CD8-positive, alpha-beta T cell (primary cell): ENCODE measurements at regions of chrX and their contacts with region 1.

Region 1: DNA sequence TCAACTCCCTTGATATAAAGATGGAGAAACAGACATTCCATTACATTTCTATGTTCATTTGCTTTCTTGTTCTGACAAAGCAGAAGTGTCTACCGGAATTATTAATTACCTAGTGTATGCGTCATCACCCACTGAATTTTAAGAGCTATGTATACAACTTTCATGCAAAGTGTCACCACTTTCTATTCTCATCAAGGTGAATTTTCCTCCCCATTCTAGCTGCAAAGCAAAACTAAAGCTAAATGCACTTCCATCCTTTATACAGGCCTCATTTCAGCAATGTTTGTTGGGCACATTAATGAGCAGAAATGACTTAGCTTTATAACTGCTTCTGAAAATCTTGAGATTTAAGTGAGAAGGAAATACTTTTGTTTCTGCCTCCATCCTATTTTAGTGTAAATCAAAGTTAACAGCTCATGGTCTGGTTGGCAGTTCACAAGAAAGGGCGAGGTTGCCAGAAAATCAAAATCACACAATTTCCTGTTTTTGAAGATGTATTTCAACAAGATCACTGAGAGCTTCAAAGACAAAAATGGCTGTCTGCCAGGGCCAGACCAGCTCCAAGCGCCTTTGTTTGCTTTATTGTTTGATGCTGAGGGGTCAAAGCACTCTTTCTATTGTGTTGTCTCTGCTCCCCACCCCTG is 7.2 kb upstream of the FAM9C start:
- DNase-seq: peak in 8 of 9 experiments; percentile 17 to 80 (median 54)
- ATAC-seq: peak; percentile 81
- H3K4me3 ChIP-seq: no peak overlapping the region
- H3K4me3 Mint-ChIP-seq: peak overlapping the region; percentile 50
- H3K27ac ChIP-seq: peak overlapping the region; percentile 39 to 74
- H3K27ac Mint-ChIP-seq: peak overlapping the region; percentile 95
- H3K4me1 ChIP-seq: peaks cover 79% of the 10 kb centered on the region
- H3K4me1 Mint-ChIP-seq: peaks cover 72% of the 10 kb centered on the region
- H3K27me3 ChIP-seq: no peaks in the 10 kb centered on the region
- H3K27me3 Mint-ChIP-seq: no peaks in the 10 kb centered on the region
- CTCF ChIP-seq: no peak

Region 2: DNA sequence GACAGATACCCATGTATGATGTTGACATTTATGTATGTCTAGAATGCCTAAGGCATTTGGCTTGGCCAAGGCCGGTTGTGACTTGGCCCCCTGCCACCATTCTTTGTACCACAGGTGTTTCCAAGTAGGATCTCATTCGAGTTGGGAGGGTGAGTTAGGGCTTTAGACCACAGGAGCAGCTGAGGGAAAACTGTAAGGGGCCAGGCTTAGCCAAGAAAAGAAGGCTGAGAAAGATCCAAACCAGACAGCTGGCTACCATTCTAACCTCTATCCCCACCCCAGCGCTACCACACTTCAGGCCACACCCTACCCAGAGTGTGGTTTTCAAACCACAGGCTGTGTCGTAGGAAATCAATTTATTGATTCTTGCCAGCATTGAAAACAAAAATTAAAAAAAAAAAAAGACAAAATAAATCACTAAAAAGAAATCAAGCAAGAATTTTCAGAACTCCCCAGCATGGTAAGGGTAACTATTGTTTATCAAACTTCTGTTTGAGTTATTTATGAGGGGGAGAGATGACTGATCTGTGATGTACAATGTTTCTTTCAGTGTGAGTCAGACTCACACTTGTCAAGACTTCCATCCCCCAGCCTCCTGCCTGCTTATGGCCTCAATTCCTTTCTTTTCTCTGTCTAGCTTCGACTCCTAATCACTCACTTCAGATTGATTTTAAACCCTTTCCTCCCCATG is 66.9 kb before region 1 on chrX:
- CTCF ChIA-PET with region 1: interaction called, 11 read pairs
- POLR2A ChIA-PET with region 1: interaction called, 10 read pairs
- intact Hi-C with region 1: loop called in 1 of 2 experiments (anchors 2 kb)
- DNase-seq: peak in 6 of 9 experiments; percentile 50 to 76 (median 60)
- ATAC-seq: peak; percentile 74
- H3K4me3 ChIP-seq: peak overlapping the region in 1 of 2 experiments; percentile 20
- H3K4me3 Mint-ChIP-seq: peak overlapping the region; percentile 78
- H3K27ac ChIP-seq: peak overlapping the region; percentile 62 to 72
- H3K27ac Mint-ChIP-seq: peak overlapping the region; percentile 99
- H3K4me1 ChIP-seq: peaks cover 69% of the 10 kb centered on the region
- H3K4me1 Mint-ChIP-seq: peaks cover 72% of the 10 kb centered on the region
- H3K27me3 ChIP-seq: no peaks in the 10 kb centered on the region
- H3K27me3 Mint-ChIP-seq: no peaks in the 10 kb centered on the region
- CTCF ChIP-seq: no peak

Region 3: GRCh38 chrX:13000301-13000811 is 51.3 kb before region 1 on chrX:
- CTCF ChIA-PET with region 1: interaction called, 6 read pairs
- POLR2A ChIA-PET with region 1: interaction called, 3 read pairs
- intact Hi-C with region 1: loop called in 1 of 2 experiments (anchors 1 kb)
- DNase-seq: peak in 6 of 9 experiments; percentile 31 to 73 (median 54)
- ATAC-seq: peak; percentile 55
- H3K4me3 ChIP-seq: peak overlapping the region; percentile 16 to 40
- H3K4me3 Mint-ChIP-seq: peak overlapping the region; percentile 82
- H3K27ac ChIP-seq: peak overlapping the region; percentile 65 to 84
- H3K27ac Mint-ChIP-seq: peak overlapping the region; percentile 96
- H3K4me1 ChIP-seq: peaks cover 68% of the 10 kb centered on the region
- H3K4me1 Mint-ChIP-seq: peaks cover 79% of the 10 kb centered on the region
- H3K27me3 ChIP-seq: no peaks in the 10 kb centered on the region
- H3K27me3 Mint-ChIP-seq: no peaks in the 10 kb centered on the region
- CTCF ChIP-seq: no peak

Region 4: GRCh38 chrX:13013363-13014110 is 38.1 kb before region 1 on chrX:
- CTCF ChIA-PET with region 1: no interaction called
- POLR2A ChIA-PET with region 1: interaction called, 10 read pairs
- intact Hi-C with region 1: no loop called
- DNase-seq: peak in 2 of 9 experiments; percentile 30 to 65
- ATAC-seq: peak; percentile 78
- H3K4me3 ChIP-seq: peak overlapping the region; percentile 14 to 18
- H3K4me3 Mint-ChIP-seq: peak overlapping the region; percentile 47
- H3K27ac ChIP-seq: peak overlapping the region; percentile 47 to 84
- H3K27ac Mint-ChIP-seq: peak overlapping the region; percentile 95
- H3K4me1 ChIP-seq: peaks cover 42% of the 10 kb centered on the region
- H3K4me1 Mint-ChIP-seq: peaks cover 57% of the 10 kb centered on the region
- H3K27me3 ChIP-seq: no peaks in the 10 kb centered on the region
- H3K27me3 Mint-ChIP-seq: no peaks in the 10 kb centered on the region
- CTCF ChIP-seq: no peak

Region 5: DNA sequence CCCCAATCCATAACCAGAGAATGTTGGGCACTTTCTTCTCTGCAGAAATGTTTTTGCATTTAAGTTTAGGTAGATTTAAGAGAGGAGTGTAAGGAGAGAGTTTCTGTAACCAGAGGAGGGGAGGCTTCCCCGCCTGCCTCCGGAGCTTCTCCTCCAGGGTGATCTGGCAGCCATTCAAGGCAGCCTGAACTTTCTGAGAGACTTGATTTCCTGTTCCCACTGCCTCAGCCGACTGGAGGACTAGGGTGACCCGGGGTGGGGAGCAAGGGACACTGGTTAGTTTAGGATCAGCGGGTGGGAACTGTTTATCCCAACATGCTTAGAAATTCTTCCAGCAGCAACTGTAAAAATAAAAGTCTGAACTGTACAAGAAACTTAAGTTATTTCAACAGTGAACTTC is 22.3 kb before region 1 on chrX:
- CTCF ChIA-PET with region 1: interaction called, 4 read pairs
- POLR2A ChIA-PET with region 1: interaction called, 13 read pairs
- intact Hi-C with region 1: loop called in 1 of 2 experiments (anchors 2 kb)
- DNase-seq: peak in 5 of 9 experiments; percentile 18 to 50 (median 24)
- ATAC-seq: no peak
- H3K4me3 ChIP-seq: peak overlapping the region in 1 of 2 experiments; percentile 5
- H3K4me3 Mint-ChIP-seq: peak overlapping the region; percentile 54
- H3K27ac ChIP-seq: peak overlapping the region; percentile 30 to 56
- H3K27ac Mint-ChIP-seq: peak overlapping the region; percentile 96
- H3K4me1 ChIP-seq: peaks cover 69% of the 10 kb centered on the region
- H3K4me1 Mint-ChIP-seq: peaks cover 73% of the 10 kb centered on the region
- H3K27me3 ChIP-seq: no peaks in the 10 kb centered on the region
- H3K27me3 Mint-ChIP-seq: no peaks in the 10 kb centered on the region
- CTCF ChIP-seq: no peak

Region 6: DNA sequence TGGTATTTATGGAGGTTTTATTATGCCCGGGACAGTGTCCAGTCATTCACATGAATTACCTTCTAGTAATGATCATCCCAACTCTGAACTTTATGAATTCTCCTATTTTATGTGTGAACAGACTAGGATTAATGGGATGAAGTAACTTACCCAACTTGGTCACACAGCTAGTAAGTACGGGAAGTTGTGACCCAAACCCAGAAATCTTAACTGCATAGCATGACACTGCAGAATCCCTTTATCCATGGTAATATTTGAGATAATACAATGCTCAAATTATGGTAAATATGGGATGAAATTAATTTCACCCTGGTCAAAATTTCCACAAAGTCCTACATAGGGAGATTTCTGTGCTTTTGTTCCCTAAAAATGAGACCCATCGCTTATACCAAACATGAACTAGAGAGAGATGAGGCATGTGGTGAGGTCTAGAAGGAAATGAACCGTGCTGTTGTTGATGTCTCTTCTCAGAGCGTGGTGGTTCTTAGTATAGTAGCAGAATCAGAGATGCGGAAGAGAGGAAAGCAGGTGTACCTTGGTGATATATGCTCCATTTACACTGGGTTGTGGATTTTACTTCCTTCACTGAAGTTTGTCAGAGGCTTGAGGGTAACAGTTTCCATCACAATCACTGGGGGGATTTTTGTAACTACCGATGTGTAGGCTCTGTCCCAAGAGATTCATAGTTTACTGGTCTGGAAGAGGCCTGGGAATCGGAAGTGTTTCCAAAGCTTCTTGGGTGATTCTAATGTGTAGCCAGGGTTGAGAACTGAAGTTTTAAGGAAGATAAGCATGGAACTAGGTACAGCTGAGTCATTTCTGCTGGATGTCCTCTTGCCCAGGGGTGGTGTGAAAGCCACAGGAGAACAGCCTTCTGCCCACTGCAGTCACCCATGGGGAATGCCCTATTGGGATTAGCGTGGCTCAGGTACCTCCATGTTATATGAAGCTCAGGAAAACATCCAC is 22.9 kb after region 1 on chrX:
- CTCF ChIA-PET with region 1: interaction called, 5 read pairs
- POLR2A ChIA-PET with region 1: interaction called, 8 read pairs
- intact Hi-C with region 1: loop called (anchors 2 kb)
- DNase-seq: peak in 2 of 9 experiments; percentile 43 to 65
- ATAC-seq: peak; percentile 91
- H3K4me3 ChIP-seq: no peak overlapping the region
- H3K4me3 Mint-ChIP-seq: peak overlapping the region; percentile 1
- H3K27ac ChIP-seq: peak overlapping the region in 1 of 2 experiments; percentile 48
- H3K27ac Mint-ChIP-seq: peak overlapping the region; percentile 93
- H3K4me1 ChIP-seq: peaks cover 63% of the 10 kb centered on the region
- H3K4me1 Mint-ChIP-seq: peaks cover 52% of the 10 kb centered on the region
- H3K27me3 ChIP-seq: no peaks in the 10 kb centered on the region
- H3K27me3 Mint-ChIP-seq: no peaks in the 10 kb centered on the region
- CTCF ChIP-seq: no peak

Region 7: GRCh38 chrX:13081395-13082205 is 29.9 kb after region 1 on chrX:
- CTCF ChIA-PET with region 1: interaction called, 11 read pairs
- POLR2A ChIA-PET with region 1: interaction called, 26 read pairs
- intact Hi-C with region 1: loop called (anchors 2 to 5 kb)
- DNase-seq: peak in 2 of 9 experiments; percentile 42 to 70
- ATAC-seq: peak; percentile 33
- H3K4me3 ChIP-seq: peak overlapping the region in 1 of 2 experiments; percentile 22
- H3K4me3 Mint-ChIP-seq: peak overlapping the region; percentile 55
- H3K27ac ChIP-seq: peak overlapping the region; percentile 48 to 73
- H3K27ac Mint-ChIP-seq: peak overlapping the region; percentile 96
- H3K4me1 ChIP-seq: peaks cover 93% of the 10 kb centered on the region
- H3K4me1 Mint-ChIP-seq: peaks cover 85% of the 10 kb centered on the region
- H3K27me3 ChIP-seq: no peaks in the 10 kb centered on the region
- H3K27me3 Mint-ChIP-seq: no peaks in the 10 kb centered on the region
- CTCF ChIP-seq: no peak